ENCODE measurements at regions of chr1 and their contacts with region 1.

Region 1: GRCh38 chr1:247209396-247209795 is 37.6 kb upstream of the ZNF124 start:
- DNase-seq: no peak
- H3K4me3 ChIP-seq: peak overlapping the region; percentile 99
- H3K27ac ChIP-seq: no peak overlapping the region
- H3K4me1 ChIP-seq: peaks cover 0 to 42% (median 12%) of the 10 kb centered on the region in 4 donors
- H3K27me3 ChIP-seq: no peaks in the 10 kb centered on the region
- CTCF ChIP-seq: no peak

Region 2: GRCh38 chr1:246931549-246932365 is 277.6 kb before region 1 on chr1 and contains the start of gene AHCTF1:
- intact Hi-C with region 1: loop called (anchors 10 kb)
- DNase-seq: peak; percentile 95 to 99
- H3K4me3 ChIP-seq: peak within 1 kb of the TSS; percentile 95 to 99
- H3K27ac ChIP-seq: peak within 1 kb of the TSS; percentile 95 to 98
- H3K4me1 ChIP-seq: peaks cover 0 to 42% (median 18%) of the 10 kb centered on the region in 4 donors
- H3K27me3 ChIP-seq: no peaks in the 10 kb centered on the region
- CTCF ChIP-seq: peak in 1 of 2 experiments; percentile 31

Region 3: DNA sequence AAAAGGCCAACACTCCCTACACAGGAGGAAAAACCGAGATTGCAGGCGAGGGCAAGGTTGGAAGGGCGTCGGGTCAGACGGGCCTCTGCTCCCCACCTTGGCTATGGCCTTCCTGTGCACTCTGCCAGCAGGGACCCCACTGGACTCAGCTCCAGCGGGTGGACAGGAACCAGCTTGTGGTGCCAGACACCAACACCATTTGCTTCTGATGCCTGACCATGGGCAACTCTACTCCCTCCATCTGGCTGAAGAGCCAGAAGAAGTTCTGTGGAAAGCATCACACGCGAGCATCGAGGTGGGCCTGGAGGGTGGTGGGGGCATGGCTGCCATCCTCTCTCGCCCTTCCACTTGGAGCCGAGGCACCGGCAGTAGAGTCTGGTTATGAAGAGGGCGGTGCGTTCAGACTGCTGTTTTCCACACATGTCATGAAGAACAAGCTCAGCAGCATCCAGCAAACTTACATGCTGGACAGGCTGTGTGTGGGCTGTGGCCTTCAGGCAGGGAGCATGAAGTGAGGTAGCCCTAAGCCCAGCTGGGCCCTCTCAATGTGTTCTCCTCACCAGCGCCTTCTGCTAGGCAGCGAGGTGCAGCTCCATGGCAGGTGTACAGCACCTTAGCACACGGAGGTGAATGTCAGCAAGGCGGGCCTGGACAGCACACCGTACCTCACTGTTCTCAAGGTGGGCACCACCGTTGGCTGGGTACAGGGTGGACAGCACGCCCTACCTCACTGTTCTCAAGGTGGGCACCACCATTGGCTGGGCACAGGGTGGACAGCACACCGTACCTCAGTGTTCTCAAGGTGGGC is 89.6 kb before region 1 on chr1:
- intact Hi-C with region 1: loop called (anchors 10 kb)
- DNase-seq: no peak
- H3K4me3 ChIP-seq: no peak overlapping the region
- H3K27ac ChIP-seq: no peak overlapping the region
- H3K4me1 ChIP-seq: no peaks in the 10 kb centered on the region
- H3K27me3 ChIP-seq: no peaks in the 10 kb centered on the region
- CTCF ChIP-seq: no peak

Measured in tibial artery (tissue), 4 donors.